AG04449 (cell line): ENCODE measurements at regions of chr10 and their contacts with region 1.

Region 1: DNA sequence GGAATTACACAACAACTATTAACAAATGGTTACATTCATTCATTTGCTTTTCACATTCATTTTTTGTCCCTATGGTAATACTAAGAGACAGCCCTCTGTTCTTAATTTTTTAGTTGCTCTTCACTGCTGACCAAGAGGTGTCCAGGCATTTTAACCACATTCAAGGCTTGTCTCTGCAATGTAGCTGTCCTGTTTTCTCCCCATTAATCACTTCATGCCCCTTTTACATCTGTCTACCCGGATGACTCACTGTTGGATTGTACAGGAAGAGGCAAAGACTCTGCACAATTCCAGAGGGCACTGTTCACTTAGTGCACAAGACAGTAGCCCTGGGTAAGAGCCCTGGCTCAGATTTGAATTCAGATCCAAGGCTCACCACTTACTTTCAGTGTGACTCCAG is 168.5 kb downstream of the NOC3L start:
- DNase-seq: no peak
- H3K4me3 ChIP-seq: no peak overlapping the region
- CTCF ChIP-seq: peak; percentile 3

Region 2: DNA sequence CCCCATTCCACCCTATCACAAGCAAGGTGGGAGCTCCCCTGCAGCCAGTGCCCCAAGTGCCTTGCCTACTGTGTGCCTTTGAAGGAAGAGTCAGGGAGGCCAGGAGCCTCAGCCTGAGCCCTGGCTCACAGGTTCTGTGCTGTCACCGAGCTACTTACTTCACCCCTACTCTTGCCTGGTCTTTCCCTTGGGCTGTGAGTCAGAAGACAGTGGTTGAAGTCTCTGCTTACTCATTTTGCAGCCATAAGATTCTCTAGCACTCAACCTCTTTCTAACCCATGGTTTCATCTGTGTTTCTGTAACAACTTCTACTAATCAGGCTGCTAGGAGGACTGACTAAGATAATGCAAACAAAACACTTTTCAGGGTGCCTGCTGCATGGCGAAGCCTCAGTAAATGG is 86.1 kb before region 1 on chr10:
- CTCF ChIA-PET with region 1: no interaction called
- POLR2A ChIA-PET with region 1: no interaction called
- DNase-seq: peak; percentile 80
- H3K4me3 ChIP-seq: no peak overlapping the region
- CTCF ChIP-seq: no peak

Region 3: DNA sequence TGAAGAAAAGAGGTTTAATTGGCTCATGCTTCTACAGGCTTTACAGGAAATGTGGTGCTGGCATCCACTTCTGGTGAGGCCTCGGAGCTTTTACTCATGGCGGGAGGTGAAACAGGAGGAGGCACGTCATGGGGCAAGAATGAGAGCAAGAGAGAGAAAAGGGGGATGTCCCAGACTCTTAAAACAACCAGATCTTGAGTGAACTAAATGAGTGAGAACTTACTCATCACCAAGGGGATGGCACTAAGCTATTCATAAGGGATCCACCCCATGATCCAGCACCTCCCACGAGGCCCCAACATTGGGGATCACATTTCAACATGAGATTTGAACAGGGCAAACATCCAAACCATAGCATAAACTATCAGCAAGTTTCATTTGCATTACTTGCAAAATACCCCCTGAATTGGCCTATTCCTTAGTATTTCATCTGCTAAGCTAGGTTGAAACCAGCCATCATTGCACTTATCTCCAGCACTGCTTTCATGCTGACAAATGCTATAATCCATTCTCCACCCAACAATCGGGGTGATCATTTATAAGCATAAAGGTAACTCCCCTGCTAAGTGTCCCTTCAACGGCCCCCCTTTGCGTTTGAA is 10.5 kb before region 1 on chr10:
- CTCF ChIA-PET with region 1: interaction called, 4 read pairs
- POLR2A ChIA-PET with region 1: interaction called, 13 read pairs
- DNase-seq: peak; percentile 99
- H3K4me3 ChIP-seq: no peak overlapping the region
- CTCF ChIP-seq: no peak

Region 4: GRCh38 chr10:94423627-94424026 is 229.4 kb after region 1 on chr10:
- CTCF ChIA-PET with region 1: no interaction called
- POLR2A ChIA-PET with region 1: no interaction called
- DNase-seq: no peak
- H3K4me3 ChIP-seq: no peak overlapping the region
- CTCF ChIP-seq: no peak

Region 5: DNA sequence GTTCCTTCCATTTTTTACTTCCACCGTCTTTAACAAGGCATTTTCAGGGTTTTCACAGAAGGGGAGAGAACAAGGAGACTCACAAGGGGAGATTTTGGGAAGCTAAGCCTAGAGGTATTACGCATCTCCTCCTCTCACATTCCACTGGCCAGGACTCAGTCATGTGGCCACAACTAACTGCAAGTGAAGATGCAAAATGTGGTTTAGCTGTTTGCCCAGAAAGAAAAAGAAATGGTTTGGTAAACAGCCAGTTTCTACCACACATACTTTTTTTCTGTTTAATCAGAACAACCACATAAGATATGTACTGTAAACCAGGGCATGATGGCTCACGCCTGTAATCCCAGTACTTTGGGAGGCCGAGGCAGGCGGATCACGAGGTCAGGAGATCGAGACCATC is 329.9 kb after region 1 on chr10:
- CTCF ChIA-PET with region 1: no interaction called
- POLR2A ChIA-PET with region 1: no interaction called
- DNase-seq: peak; percentile 14
- H3K4me3 ChIP-seq: no peak overlapping the region
- CTCF ChIP-seq: no peak